Left ventricle myocardium inferior (tissue), 1 donor: ENCODE measurements at regions of chr3 and their contacts with region 1.

Region 1: GRCh38 chr3:120417272-120417911 is 33.4 kb downstream of the FSTL1 start:
- DNase-seq: peak; percentile 89
- H3K4me3 ChIP-seq: peak overlapping the region; percentile 52
- H3K27ac ChIP-seq: peak overlapping the region; percentile 90
- H3K4me1 ChIP-seq: peaks cover 86% of the 10 kb centered on the region
- H3K27me3 ChIP-seq: no peaks in the 10 kb centered on the region
- CTCF ChIP-seq: peak; percentile 96

Region 2: DNA sequence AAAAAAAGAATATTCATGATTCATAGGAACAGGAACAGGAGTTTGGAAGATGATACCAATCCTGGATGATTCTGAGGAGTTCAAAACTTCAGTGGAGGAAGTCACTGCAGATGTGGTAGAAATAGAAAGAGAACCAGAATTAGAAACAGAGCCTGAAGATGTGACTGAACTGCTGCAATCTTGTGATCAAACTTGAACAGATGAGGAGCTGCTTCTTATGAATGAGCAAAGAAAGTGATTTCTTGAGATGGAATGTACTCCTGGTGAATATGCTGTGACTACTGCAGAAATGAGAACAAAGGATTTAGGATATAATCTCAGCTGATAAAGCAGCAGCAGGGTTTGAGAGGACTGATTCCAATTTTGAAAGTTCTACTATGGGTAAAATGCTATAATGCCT is 395.9 kb before region 1 on chr3:
- intact Hi-C with region 1: no loop called
- DNase-seq: no peak
- H3K4me3 ChIP-seq: no peak overlapping the region
- H3K27ac ChIP-seq: no peak overlapping the region
- H3K4me1 ChIP-seq: peaks cover 81% of the 10 kb centered on the region
- H3K27me3 ChIP-seq: no peaks in the 10 kb centered on the region
- CTCF ChIP-seq: no peak

Region 3: DNA sequence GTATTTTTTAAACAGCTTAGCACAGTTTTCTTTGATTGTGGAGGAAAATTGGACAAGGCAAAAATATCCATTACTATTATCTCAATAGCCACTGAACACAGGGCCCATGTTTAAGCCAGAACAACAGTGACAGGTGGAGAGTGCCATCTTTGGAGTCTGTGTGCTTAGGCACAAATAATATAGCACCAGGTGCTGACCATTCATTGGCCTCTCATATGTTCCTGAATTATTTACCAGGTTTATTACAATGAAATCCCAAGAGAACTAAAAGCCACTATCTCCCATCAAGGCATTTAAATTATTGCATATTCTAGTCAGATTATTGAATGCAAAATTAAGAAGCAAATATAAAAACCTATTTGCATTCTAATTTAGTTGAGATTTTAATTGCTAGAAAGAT is 172.0 kb before region 1 on chr3:
- intact Hi-C with region 1: loop called (anchors 5 kb)
- DNase-seq: no peak
- H3K4me3 ChIP-seq: no peak overlapping the region
- H3K27ac ChIP-seq: no peak overlapping the region
- H3K4me1 ChIP-seq: no peaks in the 10 kb centered on the region
- H3K27me3 ChIP-seq: no peaks in the 10 kb centered on the region
- CTCF ChIP-seq: no peak

Region 4: GRCh38 chr3:120795017-120795648 is 377.7 kb after region 1 on chr3:
- intact Hi-C with region 1: loop called (anchors 10 kb)
- DNase-seq: peak; percentile 71
- H3K4me3 ChIP-seq: no peak overlapping the region
- H3K27ac ChIP-seq: no peak overlapping the region
- H3K4me1 ChIP-seq: no peaks in the 10 kb centered on the region
- H3K27me3 ChIP-seq: no peaks in the 10 kb centered on the region
- CTCF ChIP-seq: peak; percentile 85